Vagina (tissue), 2 donors: ENCODE measurements at regions of chr3 and their contacts with region 1.

Region 1: GRCh38 chr3:43043793-43044192 is 62.1 kb downstream of the POMGNT2 start:
- DNase-seq: peak in 1 of 2 donors; percentile 47
- H3K4me3 ChIP-seq: no peak overlapping the region
- H3K27ac ChIP-seq: no peak overlapping the region
- H3K4me1 ChIP-seq: no peaks in the 10 kb centered on the region
- H3K27me3 ChIP-seq: no peaks in the 10 kb centered on the region
- CTCF ChIP-seq: no peak
- POLR2A ChIP-seq: no peak

Region 2: GRCh38 chr3:43097400-43098080 is 53.7 kb after region 1 on chr3:
- intact Hi-C with region 1: loop called (anchors 2 kb)
- DNase-seq: no peak
- H3K4me3 ChIP-seq: no peak overlapping the region
- H3K27ac ChIP-seq: no peak overlapping the region
- H3K4me1 ChIP-seq: peaks cover 6% of the 10 kb centered on the region
- H3K27me3 ChIP-seq: no peaks in the 10 kb centered on the region
- CTCF ChIP-seq: no peak
- POLR2A ChIP-seq: no peak